ENCODE measurements at regions of chr12 and their contacts with region 1.

Region 1: GRCh38 chr12:118061011-118061875 is at the start of gene WSB2:
- DNase-seq: peak; percentile 62 to 88 (median 72)
- H3K4me3 ChIP-seq: peak within 1 kb of the TSS; percentile 67 to 93 (median 83)
- H3K27ac ChIP-seq: peak within 1 kb of the TSS; percentile 86 to 99 (median 96)
- H3K27me3 ChIP-seq: no peaks in the 10 kb centered on the region
- CTCF ChIP-seq: no peak
- total RNA-seq, gene WSB2: 117 to 328 (median 199) TPM

Region 2: GRCh38 chr12:118016424-118017264 is 44.6 kb before region 1 on chr12 and contains the start of gene RFC5:
- intact Hi-C with region 1: loop called in 1 of 2 experiments (anchors 5 kb)
- DNase-seq: peak; percentile 94 to 98 (median 96)
- H3K4me3 ChIP-seq: peak within 1 kb of the TSS; percentile 69 to 100 (median 92)
- H3K27ac ChIP-seq: peak within 1 kb of the TSS in 11 of 59 donors; percentile 4 to 76 (median 43)
- H3K27me3 ChIP-seq: no peaks in the 10 kb centered on the region
- CTCF ChIP-seq: peak in 14 of 56 donors; percentile 9 to 43 (median 19)
- total RNA-seq, gene RFC5: 7.6 to 22.3 (median 14.5) TPM

Region 3: GRCh38 chr12:118103604-118104382 is 42.5 kb after region 1 on chr12 and contains the start of gene VSIG10:
- intact Hi-C with region 1: loop called in 1 of 2 experiments (anchors 5 kb)
- DNase-seq: peak in 8 of 10 donors; percentile 12 to 69 (median 30)
- H3K4me3 ChIP-seq: peak within 1 kb of the TSS; percentile 56 to 90 (median 78)
- H3K27ac ChIP-seq: peak within 1 kb of the TSS in 53 of 59 donors; percentile 6 to 85 (median 60)
- H3K27me3 ChIP-seq: no peaks in the 10 kb centered on the region
- CTCF ChIP-seq: peak in 5 of 56 donors; percentile 5 to 28 (median 17)
- total RNA-seq, gene VSIG10: 9.9 to 40.2 (median 19.8) TPM

Region 4: GRCh38 chr12:118220702-118221101 is 159.5 kb after region 1 on chr12:
- intact Hi-C with region 1: no loop called
- DNase-seq: no peak
- H3K4me3 ChIP-seq: no peak overlapping the region
- H3K27ac ChIP-seq: peak overlapping the region in 13 of 59 donors; percentile 4 to 50 (median 24)
- H3K27me3 ChIP-seq: no peaks in the 10 kb centered on the region
- CTCF ChIP-seq: no peak

Measured in dorsolateral prefrontal cortex (tissue), 120 donors.